A549 (cell line): ENCODE measurements at regions of chr6 and their contacts with region 1.

Region 1: DNA sequence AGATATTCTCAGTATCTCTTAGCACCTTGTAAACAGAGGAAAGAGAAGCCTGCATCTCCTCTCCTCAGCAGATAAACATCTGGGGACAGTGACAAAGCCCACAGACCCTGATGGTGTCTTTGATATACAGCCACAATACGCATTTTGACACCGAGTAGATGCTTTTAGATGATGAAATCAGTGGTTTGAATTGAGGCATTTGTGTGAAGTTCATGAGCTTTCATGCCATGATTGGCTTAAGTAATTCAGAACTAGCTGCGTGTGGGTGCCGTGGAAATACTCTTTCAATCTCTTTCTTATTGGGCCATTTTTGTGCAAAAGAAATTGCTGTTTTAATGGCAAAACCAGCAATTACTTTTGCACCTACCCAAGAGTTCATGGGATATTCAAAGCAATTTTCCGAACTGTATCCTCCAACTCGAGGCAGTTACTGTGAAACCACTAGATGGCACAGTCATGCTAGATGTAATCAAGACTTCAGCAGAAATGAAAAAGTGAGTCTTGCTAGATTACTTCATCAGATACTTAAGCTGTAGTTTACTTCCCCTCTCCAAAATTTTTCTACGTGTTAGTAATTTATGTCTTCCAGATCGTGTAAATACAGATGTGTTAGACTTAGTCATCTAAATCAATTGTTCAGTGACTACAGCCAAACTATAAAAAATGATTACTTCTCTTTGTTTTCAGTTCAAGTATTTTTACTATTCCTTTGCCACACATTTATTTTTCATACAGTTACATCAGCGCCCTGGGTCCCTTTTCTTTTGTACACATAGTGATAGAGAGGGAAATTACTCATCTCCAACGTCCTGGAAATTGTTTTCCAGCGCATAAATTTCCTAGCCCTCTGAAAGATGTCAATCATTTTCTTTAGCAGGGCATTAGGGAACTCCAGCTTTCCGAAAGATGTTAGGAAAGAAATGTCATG is 49.4 kb downstream of the IYD start:
- DNase-seq: peak; percentile 68 to 73
- ATAC-seq: peak; percentile 88 to 93
- H3K4me3 ChIP-seq: peak overlapping the region; percentile 37
- H3K27ac ChIP-seq: peak overlapping the region; percentile 80 to 87
- H3K4me1 ChIP-seq: peaks cover 11% of the 10 kb centered on the region; the same call in 2 of the 3 replicates
- CTCF ChIP-seq: peak; percentile 75
- EP300 ChIP-seq: peak in 1 of 2 experiments; percentile 61; a peak in 2 of 5 replicates
- POLR2A ChIP-seq: no peak
- RAD21 ChIP-seq: peak; percentile 70 to 80

Region 2: DNA sequence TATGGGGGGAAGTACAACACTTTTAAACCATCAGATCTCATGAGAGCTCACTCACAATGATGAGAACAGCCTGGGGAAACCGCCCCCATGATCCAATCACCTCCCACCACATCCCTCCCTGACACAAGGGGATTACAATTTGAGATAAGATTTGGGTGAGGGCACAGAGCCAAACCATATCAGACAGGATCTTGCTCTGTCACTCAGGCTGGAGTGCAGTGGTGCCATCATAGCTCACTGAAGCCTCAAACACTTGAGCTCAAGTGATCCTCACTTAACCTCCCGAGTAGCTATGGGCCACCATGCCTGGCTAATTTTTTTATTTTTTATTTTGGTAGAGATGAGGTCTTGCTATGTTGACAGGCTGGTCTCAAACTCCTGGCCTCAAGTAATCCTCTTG is 54.4 kb before region 1 on chr6:
- CTCF ChIA-PET with region 1: no interaction called
- POLR2A ChIA-PET with region 1: no interaction called
- DNase-seq: no peak
- ATAC-seq: no peak
- H3K4me3 ChIP-seq: no peak overlapping the region
- H3K27ac ChIP-seq: no peak overlapping the region
- H3K4me1 ChIP-seq: no peaks in the 10 kb centered on the region
- CTCF ChIP-seq: no peak
- EP300 ChIP-seq: no peak
- POLR2A ChIP-seq: no peak
- RAD21 ChIP-seq: no peak

Region 3: DNA sequence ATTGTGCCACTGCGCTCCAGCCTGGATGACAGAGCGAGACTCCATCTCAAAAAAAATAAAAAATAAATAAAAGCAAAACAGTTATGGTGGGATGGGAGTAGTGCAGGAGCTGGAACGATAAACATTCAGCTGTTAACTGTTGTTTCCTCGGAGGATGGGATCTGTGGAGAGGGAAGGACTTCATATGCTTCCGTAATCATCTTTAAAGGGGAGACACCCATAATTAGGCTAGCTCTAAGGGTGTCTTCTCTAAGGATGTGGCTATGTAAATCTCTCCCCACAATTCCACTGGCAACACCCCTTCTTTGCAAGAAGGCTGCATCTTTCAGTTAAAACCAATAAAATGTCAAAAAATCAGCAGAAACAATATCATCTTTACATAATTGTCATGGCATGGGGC is 404.8 kb after region 1 on chr6:
- CTCF ChIA-PET with region 1: interaction called, 86 read pairs
- POLR2A ChIA-PET with region 1: no interaction called
- DNase-seq: no peak
- ATAC-seq: no peak
- H3K4me3 ChIP-seq: no peak overlapping the region
- H3K27ac ChIP-seq: no peak overlapping the region
- H3K4me1 ChIP-seq: 0 out of 3 replicates have a peak, but pooled peaks cover 2% of the 10 kb centered on the region
- CTCF ChIP-seq: no peak
- EP300 ChIP-seq: no peak
- POLR2A ChIP-seq: no peak
- RAD21 ChIP-seq: no peak